CD4-positive, alpha-beta memory T cell (primary cell): ENCODE measurements at regions of chr3 and their contacts with region 1.

Region 1: GRCh38 chr3:113495035-113495434 is 19.9 kb downstream of the SPICE1 start:
- DNase-seq: peak; percentile 38 to 46 (median 41)
- H3K4me3 ChIP-seq: no peak overlapping the region
- H3K4me3 Mint-ChIP-seq: no peak overlapping the region
- H3K27ac ChIP-seq: no peak overlapping the region
- H3K27ac Mint-ChIP-seq: peak overlapping the region in 1 of 7 donors; percentile 43
- H3K4me1 ChIP-seq: no peaks in the 10 kb centered on the region
- H3K4me1 Mint-ChIP-seq: peaks cover 0 to 4% (median 2%) of the 10 kb centered on the region in 4 donors
- H3K27me3 ChIP-seq: no peaks in the 10 kb centered on the region
- H3K27me3 Mint-ChIP-seq: no peaks in the 10 kb centered on the region

Region 2: GRCh38 chr3:113507501-113508067 is 12.5 kb after region 1 on chr3:
- CTCF ChIA-PET with region 1: interaction called, 68 read pairs
- POLR2A ChIA-PET with region 1: interaction called, 5 read pairs
- intact Hi-C with region 1: no loop called
- DNase-seq: no peak
- H3K4me3 ChIP-seq: no peak overlapping the region
- H3K4me3 Mint-ChIP-seq: no peak overlapping the region
- H3K27ac ChIP-seq: no peak overlapping the region
- H3K27ac Mint-ChIP-seq: no peak overlapping the region
- H3K4me1 ChIP-seq: no peaks in the 10 kb centered on the region
- H3K4me1 Mint-ChIP-seq: peaks cover 0 to 17% (median 5%) of the 10 kb centered on the region in 4 donors
- H3K27me3 ChIP-seq: no peaks in the 10 kb centered on the region
- H3K27me3 Mint-ChIP-seq: no peaks in the 10 kb centered on the region

Region 3: GRCh38 chr3:113531826-113532697 is 37.0 kb after region 1 on chr3 and contains the start of gene SIDT1:
- CTCF ChIA-PET with region 1: interaction called, 15 read pairs
- POLR2A ChIA-PET with region 1: interaction called, 4 read pairs
- intact Hi-C with region 1: loop called (anchors 1 kb)
- DNase-seq: peak; percentile 77 to 84 (median 80)
- H3K4me3 ChIP-seq: peak within 1 kb of the TSS; percentile 79 to 96
- H3K4me3 Mint-ChIP-seq: peak within 1 kb of the TSS; percentile 97 to 100 (median 99)
- H3K27ac ChIP-seq: peak within 1 kb of the TSS; percentile 90
- H3K27ac Mint-ChIP-seq: peak within 1 kb of the TSS; percentile 95 to 100 (median 100)
- H3K4me1 ChIP-seq: peaks cover 45% of the 10 kb centered on the region
- H3K4me1 Mint-ChIP-seq: peaks cover 36 to 55% (median 45%) of the 10 kb centered on the region in 4 donors
- H3K27me3 ChIP-seq: no peaks in the 10 kb centered on the region
- H3K27me3 Mint-ChIP-seq: no peaks in the 10 kb centered on the region
- total RNA-seq, gene SIDT1: 55.0 to 56.1 TPM

Region 4: GRCh38 chr3:113560831-113561623 is 66.0 kb after region 1 on chr3:
- CTCF ChIA-PET with region 1: interaction called, 64 read pairs
- POLR2A ChIA-PET with region 1: no interaction called
- intact Hi-C with region 1: no loop called
- DNase-seq: peak in 4 of 5 donors; percentile 31 to 57 (median 38)
- H3K4me3 ChIP-seq: no peak overlapping the region
- H3K4me3 Mint-ChIP-seq: peak overlapping the region in 6 of 8 donors; percentile 13 to 69 (median 25)
- H3K27ac ChIP-seq: peak overlapping the region; percentile 1
- H3K27ac Mint-ChIP-seq: peak overlapping the region; percentile 25 to 94 (median 77)
- H3K4me1 ChIP-seq: peaks cover 41% of the 10 kb centered on the region
- H3K4me1 Mint-ChIP-seq: peaks cover 49 to 63% (median 58%) of the 10 kb centered on the region in 4 donors
- H3K27me3 ChIP-seq: no peaks in the 10 kb centered on the region
- H3K27me3 Mint-ChIP-seq: no peaks in the 10 kb centered on the region

Region 5: DNA sequence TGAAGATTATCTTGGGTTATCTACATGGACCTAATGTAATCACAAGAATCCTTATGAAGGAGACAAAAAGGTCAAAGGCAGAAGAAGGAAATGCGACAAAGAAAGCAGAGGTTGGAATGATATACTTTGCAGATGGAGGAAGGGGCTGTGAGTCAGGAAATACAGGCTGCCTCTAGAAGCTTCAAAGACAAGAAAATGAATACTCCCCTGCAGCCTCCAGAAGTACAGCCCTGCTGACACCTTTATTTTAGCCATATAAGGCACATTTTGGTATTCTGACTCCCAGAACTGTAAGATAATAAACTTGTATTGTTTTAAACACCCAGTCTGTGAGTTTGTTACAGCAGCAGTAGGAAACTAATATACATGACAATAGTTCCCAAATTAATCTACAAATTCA is 95.9 kb after region 1 on chr3:
- CTCF ChIA-PET with region 1: interaction called, 10 read pairs
- POLR2A ChIA-PET with region 1: no interaction called
- intact Hi-C with region 1: no loop called
- DNase-seq: no peak
- H3K4me3 ChIP-seq: no peak overlapping the region
- H3K4me3 Mint-ChIP-seq: no peak overlapping the region
- H3K27ac ChIP-seq: no peak overlapping the region
- H3K27ac Mint-ChIP-seq: peak overlapping the region in 3 of 7 donors; percentile 11 to 58 (median 36)
- H3K4me1 ChIP-seq: no peaks in the 10 kb centered on the region
- H3K4me1 Mint-ChIP-seq: peaks cover 0 to 1% (median under 1%) of the 10 kb centered on the region in 4 donors
- H3K27me3 ChIP-seq: no peaks in the 10 kb centered on the region
- H3K27me3 Mint-ChIP-seq: no peaks in the 10 kb centered on the region